ENCODE measurements at regions of chr19 and their contacts with region 1.

Region 1: DNA sequence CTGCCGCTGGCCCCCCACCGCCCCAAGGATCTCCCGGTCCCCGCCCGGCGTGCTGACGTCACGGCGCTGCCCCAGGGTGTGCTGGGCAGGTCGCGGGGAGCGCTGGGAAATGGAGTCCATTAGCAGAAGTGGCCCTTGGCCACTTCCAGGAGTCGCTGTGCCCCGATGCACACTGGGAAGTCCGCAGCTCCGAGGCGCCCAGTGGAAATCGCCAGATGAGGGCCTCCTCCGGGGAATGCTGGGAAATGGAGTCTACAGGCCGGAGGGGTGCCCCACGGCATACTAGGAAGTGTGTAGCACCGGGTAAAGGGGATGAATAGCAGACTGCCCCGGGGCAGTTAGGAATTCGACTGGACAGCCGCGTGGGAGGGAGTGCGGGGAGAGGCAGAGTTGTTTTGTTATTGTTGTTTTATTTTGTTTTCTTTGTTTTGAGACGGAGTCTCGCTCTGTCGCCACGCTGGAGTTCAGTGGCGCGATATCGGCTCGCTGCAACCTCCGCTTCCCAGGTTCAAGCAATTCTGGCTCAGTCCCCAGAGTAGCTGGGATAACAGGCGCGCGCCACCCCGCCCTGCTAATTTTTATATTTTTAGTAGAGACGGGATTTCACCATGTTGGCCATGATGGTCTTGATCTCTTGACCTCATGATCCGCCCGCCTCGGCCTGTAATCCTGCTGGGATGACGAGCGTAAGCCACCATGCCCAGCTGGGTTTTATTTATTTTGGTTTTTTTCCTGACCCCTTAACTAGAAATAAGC is at the start of gene PPP1R12C:
- DNase-seq: peak; percentile 95
- ATAC-seq: peak; percentile 95
- H3K4me3 ChIP-seq: peak within 1 kb of the TSS; percentile 75 to 98 (median 81)
- H3K4me3 Mint-ChIP-seq: peak within 1 kb of the TSS; percentile 98
- H3K27ac ChIP-seq: peak within 1 kb of the TSS; percentile 31 to 77
- H3K27ac Mint-ChIP-seq: peak within 1 kb of the TSS; percentile 97
- H3K4me1 ChIP-seq: peaks cover 12 to 42% of the 10 kb centered on the region in 2 donors
- H3K4me1 Mint-ChIP-seq: peaks cover 50% of the 10 kb centered on the region
- H3K27me3 ChIP-seq: no peaks in the 10 kb centered on the region
- H3K27me3 Mint-ChIP-seq: peaks cover 3% of the 10 kb centered on the region
- CTCF ChIP-seq: no peak
- total RNA-seq, gene PPP1R12C: 174 and 179 TPM in 2 replicates

Region 2: DNA sequence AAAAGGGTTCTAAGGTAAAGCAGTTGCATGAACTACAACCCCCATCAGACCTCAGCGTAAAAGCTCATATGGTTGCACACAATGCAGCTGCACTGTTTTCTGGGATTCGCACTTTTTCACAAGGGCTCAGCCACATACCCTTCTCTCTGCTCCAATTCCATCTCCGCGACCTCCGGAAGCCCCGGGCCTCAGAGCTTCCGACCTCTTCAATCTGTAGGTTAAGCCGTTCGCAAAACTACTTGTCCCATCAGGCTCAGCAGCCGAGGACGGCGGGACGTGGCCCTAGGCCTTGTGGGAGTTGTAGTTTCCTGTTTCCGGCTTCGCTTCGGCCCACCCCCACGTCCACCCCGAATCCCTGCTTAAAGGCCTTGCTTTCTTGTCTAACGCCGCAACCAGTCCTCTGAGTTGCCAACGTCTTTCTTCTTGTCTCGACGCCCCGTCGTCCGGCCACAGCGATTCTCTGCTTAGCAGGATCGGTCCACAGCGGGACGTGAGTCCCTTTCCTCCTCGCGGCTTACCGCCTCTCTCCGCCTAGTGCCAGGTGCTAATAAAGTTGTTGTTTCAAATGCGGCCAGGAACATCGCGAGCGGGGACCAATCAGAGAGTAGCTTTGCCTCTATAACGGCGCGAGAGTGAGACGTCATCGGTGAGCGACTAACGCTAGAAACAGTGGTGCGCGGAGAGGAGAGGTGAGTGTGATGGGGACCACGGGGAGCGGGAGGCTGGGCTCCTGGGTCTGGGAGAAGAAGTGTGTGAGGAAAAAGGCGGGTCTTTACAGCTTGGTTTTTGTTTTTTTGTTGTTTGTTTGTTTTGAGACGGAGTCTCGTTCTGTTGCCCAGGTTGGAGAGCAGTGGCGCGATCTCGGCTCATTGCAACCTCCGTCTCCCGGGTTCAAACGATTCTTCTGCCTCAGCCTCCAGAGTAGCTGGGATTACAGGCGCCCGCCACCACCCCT is 1002.4 kb before region 1 on chr19 and contains the starts of genes PRPF31 and TFPT:
- CTCF ChIA-PET with region 1: no interaction called
- POLR2A ChIA-PET with region 1: no interaction called
- intact Hi-C with region 1: loop called (anchors 10 kb)
- DNase-seq: peak; percentile 99
- ATAC-seq: peak; percentile 93
- H3K4me3 ChIP-seq: peak within 1 kb of the TSS; percentile 71 to 86 (median 81)
- H3K4me3 Mint-ChIP-seq: peak within 1 kb of the TSS; percentile 89
- H3K27ac ChIP-seq: peak within 1 kb of the TSS; percentile 76 to 78
- H3K27ac Mint-ChIP-seq: peak within 1 kb of the TSS; percentile 87
- H3K4me1 ChIP-seq: peaks cover 14 to 25% of the 10 kb centered on the region in 2 donors
- H3K4me1 Mint-ChIP-seq: peaks cover 31% of the 10 kb centered on the region
- H3K27me3 ChIP-seq: no peaks in the 10 kb centered on the region
- H3K27me3 Mint-ChIP-seq: no peaks in the 10 kb centered on the region
- CTCF ChIP-seq: no peak
- total RNA-seq, gene PRPF31: 65.4 and 66.2 TPM in 2 replicates
- total RNA-seq, gene TFPT: 10.4 and 12.7 TPM in 2 replicates

Region 3: DNA sequence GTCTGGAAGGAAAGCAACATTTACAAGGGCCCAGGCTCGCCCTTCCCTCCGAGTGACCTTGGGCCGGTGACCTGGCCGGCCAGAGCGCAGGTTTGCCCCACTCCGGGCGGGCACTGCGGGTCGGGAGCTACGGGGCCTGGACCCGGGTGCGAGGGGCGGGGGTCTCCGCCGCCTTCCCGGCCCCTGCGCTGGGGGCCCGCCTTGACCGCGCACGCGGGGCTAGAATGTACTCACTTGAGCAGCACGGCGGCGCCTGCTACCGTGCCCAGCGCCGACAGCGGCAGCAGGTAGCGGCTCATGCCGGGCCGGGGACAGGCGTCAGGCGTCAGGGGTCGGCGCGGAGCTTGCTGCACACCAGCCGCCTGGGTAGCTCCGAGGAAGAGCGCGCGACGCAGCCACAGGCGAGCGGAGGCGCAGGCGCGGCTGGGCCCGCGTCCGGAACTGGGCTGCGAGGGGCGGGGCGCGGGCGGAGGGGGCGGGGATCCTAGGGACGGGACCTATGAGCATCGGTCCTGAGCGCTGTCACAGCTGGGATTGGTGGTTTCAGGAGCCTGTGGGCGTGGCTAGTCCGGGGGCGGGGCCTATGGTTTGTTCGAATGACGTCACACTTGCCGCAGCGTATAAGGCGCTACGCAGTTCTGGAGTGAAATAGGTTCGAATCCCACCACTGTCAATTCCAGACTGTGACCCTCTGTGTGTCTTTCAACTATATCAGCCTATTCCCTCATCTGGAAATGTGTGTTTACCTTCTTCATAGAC is 54.9 kb before region 1 on chr19 and contains the start of gene RDH13:
- CTCF ChIA-PET with region 1: no interaction called
- POLR2A ChIA-PET with region 1: no interaction called
- intact Hi-C with region 1: loop called (anchors 1 kb)
- DNase-seq: peak; percentile 96
- ATAC-seq: peak; percentile 99
- H3K4me3 ChIP-seq: peak within 1 kb of the TSS in 4 of 5 experiments; percentile 49 to 68 (median 64)
- H3K4me3 Mint-ChIP-seq: peak within 1 kb of the TSS; percentile 82
- H3K27ac ChIP-seq: peak within 1 kb of the TSS; percentile 38 to 71
- H3K27ac Mint-ChIP-seq: peak within 1 kb of the TSS; percentile 77
- H3K4me1 ChIP-seq: peaks cover 7 to 13% of the 10 kb centered on the region in 2 donors
- H3K4me1 Mint-ChIP-seq: peaks cover 6% of the 10 kb centered on the region
- H3K27me3 ChIP-seq: peaks cover 0 to 19% (median under 1%) of the 10 kb centered on the region in 4 experiments
- H3K27me3 Mint-ChIP-seq: peaks cover 16% of the 10 kb centered on the region
- CTCF ChIP-seq: no peak
- total RNA-seq, gene RDH13: 17.5 and 20.2 TPM in 2 replicates

Region 4: DNA sequence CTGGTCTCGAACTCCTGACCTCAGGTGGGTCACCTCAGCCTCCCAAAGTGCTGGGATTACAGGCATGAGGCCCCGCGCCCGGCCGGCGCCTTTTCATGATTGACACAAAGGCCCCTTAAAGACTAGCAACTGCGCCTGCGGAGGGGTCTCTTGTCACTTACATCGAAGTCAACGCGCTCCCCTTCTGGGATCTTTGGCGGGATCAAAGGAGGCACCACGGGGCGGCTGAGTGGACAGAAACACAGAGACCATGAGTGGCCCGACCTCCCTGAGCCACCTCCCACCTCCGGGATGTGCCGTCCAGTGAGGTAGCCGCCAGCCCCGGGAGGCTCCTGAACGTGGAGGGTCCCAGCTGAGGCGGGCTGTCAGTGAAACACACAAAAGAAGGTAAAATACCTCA is 23.9 kb after region 1 on chr19:
- CTCF ChIA-PET with region 1: interaction called, 10 read pairs
- POLR2A ChIA-PET with region 1: interaction called, 3 read pairs
- intact Hi-C with region 1: no loop called
- DNase-seq: no peak
- ATAC-seq: no peak
- H3K4me3 ChIP-seq: peak overlapping the region in 1 of 5 experiments; percentile 24
- H3K4me3 Mint-ChIP-seq: no peak overlapping the region
- H3K27ac ChIP-seq: no peak overlapping the region
- H3K27ac Mint-ChIP-seq: no peak overlapping the region
- H3K4me1 ChIP-seq: peaks cover 19 to 20% of the 10 kb centered on the region in 2 donors
- H3K4me1 Mint-ChIP-seq: peaks cover 7% of the 10 kb centered on the region
- H3K27me3 ChIP-seq: peaks cover 0 to 80% (median 26%) of the 10 kb centered on the region in 4 experiments
- H3K27me3 Mint-ChIP-seq: peaks cover 36% of the 10 kb centered on the region
- CTCF ChIP-seq: no peak

Region 5: GRCh38 chr19:55152010-55152409 is 34.2 kb after region 1 on chr19:
- CTCF ChIA-PET with region 1: no interaction called
- POLR2A ChIA-PET with region 1: no interaction called
- intact Hi-C with region 1: no loop called
- DNase-seq: no peak
- ATAC-seq: no peak
- H3K4me3 ChIP-seq: no peak overlapping the region
- H3K4me3 Mint-ChIP-seq: no peak overlapping the region
- H3K27ac ChIP-seq: peak overlapping the region in 1 of 2 donors; percentile 58
- H3K27ac Mint-ChIP-seq: no peak overlapping the region
- H3K4me1 ChIP-seq: peaks cover 11 to 12% of the 10 kb centered on the region in 2 donors
- H3K4me1 Mint-ChIP-seq: peaks cover 17% of the 10 kb centered on the region
- H3K27me3 ChIP-seq: peaks cover 0 to 43% (median 13%) of the 10 kb centered on the region in 4 experiments
- H3K27me3 Mint-ChIP-seq: peaks cover 39% of the 10 kb centered on the region
- CTCF ChIP-seq: no peak

Region 6: DNA sequence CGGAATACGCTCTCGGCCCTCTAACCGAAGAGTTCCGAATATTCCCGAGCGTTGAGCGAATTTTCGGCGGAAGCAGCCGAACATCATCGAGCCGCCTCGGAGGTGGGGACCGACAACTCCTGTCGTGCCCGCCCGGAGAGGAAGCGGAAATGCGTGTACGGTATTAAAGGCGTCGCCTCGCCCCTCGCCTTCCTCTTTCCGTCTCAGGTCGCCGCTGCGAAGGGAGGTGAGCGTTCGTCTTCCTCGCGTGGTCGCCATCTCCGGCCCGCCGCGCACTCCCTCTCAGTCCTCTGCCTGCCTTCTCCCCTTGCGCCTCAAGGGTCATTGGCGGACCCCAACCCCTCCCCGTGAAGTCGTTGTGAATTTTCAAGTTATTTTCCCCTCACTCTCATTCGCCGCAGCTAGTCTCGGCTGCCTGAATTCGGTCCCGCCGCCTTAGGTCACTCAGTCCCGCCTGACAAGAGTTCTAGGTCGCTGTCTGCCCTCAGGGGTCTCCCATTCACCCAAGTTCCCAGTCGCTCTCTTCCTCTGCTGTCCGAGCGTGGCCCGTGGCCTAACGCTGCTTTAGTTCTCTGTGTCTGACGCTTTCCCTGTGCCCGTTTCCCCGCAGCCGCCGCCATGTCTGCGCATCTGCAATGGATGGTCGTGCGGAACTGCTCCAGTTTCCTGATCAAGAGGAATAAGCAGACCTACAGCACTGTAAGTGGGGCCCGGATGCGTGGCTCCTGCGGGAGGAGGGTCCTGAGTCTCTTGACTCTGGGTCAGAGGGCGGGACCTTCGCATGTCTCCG is 268.1 kb after region 1 on chr19 and contains the start of gene RPL28:
- CTCF ChIA-PET with region 1: no interaction called
- POLR2A ChIA-PET with region 1: no interaction called
- intact Hi-C with region 1: loop called (anchors 1 kb)
- DNase-seq: peak; percentile 99
- ATAC-seq: peak; percentile 81
- H3K4me3 ChIP-seq: peak within 1 kb of the TSS; percentile 85 to 99 (median 97)
- H3K4me3 Mint-ChIP-seq: peak within 1 kb of the TSS; percentile 100
- H3K27ac ChIP-seq: peak within 1 kb of the TSS; percentile 96
- H3K27ac Mint-ChIP-seq: peak within 1 kb of the TSS; percentile 100
- H3K4me1 ChIP-seq: peaks cover 40 to 57% of the 10 kb centered on the region in 2 donors
- H3K4me1 Mint-ChIP-seq: peaks cover 68% of the 10 kb centered on the region
- H3K27me3 ChIP-seq: no peaks in the 10 kb centered on the region
- H3K27me3 Mint-ChIP-seq: no peaks in the 10 kb centered on the region
- CTCF ChIP-seq: no peak
- total RNA-seq, gene RPL28: 2,397 and 2,578 TPM in 2 replicates